H1 (cell line): ENCODE measurements at regions of chr1 and their contacts with region 1.

Region 1: DNA sequence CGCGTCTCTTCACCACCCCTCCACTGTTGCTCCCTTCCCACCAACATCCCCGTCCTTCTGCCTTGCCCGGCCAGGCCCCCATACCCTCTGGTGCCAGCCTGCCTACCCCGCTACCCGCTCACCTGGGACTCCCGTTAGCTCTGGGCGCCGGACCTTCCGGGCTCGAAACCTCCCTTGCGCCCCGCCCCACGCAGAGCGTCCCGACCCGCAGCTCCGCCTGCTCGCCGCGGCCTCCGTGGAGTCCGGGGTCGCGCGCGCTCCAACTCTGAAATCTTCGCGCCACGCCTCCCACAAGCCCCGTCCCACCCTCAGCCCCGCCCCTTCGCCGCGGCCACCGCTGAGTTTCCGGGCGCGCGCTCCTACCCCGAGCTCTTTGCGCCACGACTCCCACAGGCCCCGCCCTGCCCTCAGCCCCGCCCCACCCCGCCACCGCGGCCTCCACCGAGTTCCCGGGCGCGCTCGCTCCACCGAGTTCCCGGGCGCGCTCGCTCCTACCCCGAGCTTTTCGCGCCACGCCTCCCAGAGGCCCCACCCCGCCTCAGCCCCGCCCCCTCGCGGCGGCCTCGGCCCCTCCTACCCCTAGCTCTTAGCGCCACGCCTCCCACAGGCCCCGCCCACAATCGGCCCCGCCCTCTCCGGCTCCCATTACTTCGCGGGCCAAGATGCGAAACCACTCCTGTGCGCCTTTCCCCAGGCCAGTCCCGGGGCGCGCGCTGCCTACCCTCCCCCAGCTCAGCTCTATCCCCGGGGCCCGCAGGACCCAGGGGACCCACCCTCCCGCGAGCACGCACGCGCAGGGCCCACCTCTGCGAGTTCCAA is at the start of gene IFT25:
- DNase-seq: peak; percentile 73 to 100
- H3K4me3 ChIP-seq: peak within 1 kb of the TSS; percentile 77 to 98 (median 79)
- H3K27ac ChIP-seq: peak within 1 kb of the TSS; percentile 49; the same call in 1 of the 2 replicates
- H3K4me1 ChIP-seq: peaks cover 4 to 18% (median 10%) of the 10 kb centered on the region in 4 experiments
- H3K27me3 ChIP-seq: no peaks in the 10 kb centered on the region
- CTCF ChIP-seq: no peak
- EP300 ChIP-seq: no peak
- POLR2A ChIP-seq: no peak; a peak in 1 of 3 replicates
- RAD21 ChIP-seq: no peak
- total RNA-seq, gene IFT25: 29.7 and 36.3 TPM in 2 replicates

Region 2: DNA sequence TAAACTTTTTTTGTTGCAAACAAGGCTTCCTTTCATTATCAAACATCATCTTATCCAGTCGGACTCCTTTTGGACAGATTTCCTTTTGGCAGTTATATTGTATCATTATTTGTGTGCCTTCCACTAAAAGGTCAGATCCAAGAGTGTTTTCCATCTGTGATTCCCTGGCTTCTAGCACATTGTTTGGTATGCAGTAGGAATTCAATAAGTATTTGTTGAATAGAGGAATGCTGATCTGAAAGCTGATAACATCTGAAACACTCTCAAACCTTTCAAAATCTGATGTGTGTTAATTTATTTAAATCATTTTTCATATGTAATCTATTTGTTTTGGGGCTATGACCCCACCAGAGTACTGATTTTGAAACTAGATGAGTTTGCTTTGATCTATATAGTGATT is 146.5 kb before region 1 on chr1:
- CTCF ChIA-PET with region 1: no interaction called
- POLR2A ChIA-PET with region 1: no interaction called
- DNase-seq: no peak
- H3K4me3 ChIP-seq: no peak overlapping the region
- H3K27ac ChIP-seq: no peak overlapping the region
- H3K4me1 ChIP-seq: no peaks in the 10 kb centered on the region
- H3K27me3 ChIP-seq: no peaks in the 10 kb centered on the region
- CTCF ChIP-seq: no peak
- EP300 ChIP-seq: no peak
- POLR2A ChIP-seq: no peak
- RAD21 ChIP-seq: no peak

Region 3: GRCh38 chr1:53869454-53870117 is 76.1 kb before region 1 on chr1:
- CTCF ChIA-PET with region 1: interaction called, 123 read pairs
- POLR2A ChIA-PET with region 1: interaction called, 4 read pairs
- DNase-seq: no peak
- H3K4me3 ChIP-seq: no peak overlapping the region
- H3K27ac ChIP-seq: no peak overlapping the region
- H3K4me1 ChIP-seq: no peaks in the 10 kb centered on the region
- H3K27me3 ChIP-seq: no peaks in the 10 kb centered on the region
- CTCF ChIP-seq: no peak
- EP300 ChIP-seq: no peak
- POLR2A ChIP-seq: no peak
- RAD21 ChIP-seq: no peak

Region 4: DNA sequence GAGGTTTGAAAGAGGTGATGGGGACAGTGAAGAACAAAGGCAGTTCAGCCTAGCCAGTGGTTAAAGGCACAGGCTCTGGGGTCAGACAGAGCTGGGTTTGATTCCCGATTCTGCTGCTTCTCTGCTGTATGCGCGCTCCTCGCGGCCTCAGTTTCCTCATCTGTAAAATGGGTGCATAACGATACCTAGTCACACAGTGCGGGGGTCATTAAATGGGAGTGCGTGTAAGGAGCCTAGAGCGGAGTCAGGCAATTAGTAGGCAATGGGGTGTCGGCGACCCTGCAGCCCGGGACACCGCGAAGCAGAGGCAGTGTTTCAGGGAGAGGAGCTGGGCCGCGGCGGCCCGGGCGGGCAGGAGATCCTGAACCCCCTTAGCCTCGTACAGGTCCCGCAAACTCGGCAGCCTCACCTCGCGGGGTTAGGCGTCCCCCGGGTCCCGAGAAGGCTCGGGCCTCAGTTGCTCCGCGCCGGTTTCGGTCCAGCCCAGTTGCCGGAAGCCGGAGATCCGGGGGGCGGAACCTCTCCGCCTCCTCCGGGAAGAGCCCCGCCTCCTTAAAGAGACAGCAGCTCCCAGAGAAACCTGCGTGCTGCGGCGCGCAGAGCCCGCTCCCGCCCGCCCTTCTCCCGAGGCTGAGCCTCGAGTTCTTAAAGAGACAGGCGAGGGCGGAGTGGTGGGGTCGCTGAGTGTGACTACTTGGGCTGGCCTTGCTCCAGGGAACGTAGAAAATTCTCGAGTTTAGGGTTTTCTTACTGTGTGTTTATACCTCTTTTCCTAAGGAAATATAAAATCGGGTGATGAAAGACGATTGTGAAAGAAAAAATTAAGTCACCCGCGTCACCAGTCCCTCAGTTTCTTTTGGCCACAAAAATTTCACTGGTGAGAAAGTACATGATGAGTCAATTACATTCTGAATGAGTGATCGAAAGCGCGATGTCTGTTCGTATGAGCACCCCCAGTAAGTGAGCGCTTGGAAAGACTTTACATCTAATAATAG is 56.0 kb before region 1 on chr1 and contains the start of gene YIPF1:
- CTCF ChIA-PET with region 1: interaction called, 14 read pairs
- POLR2A ChIA-PET with region 1: interaction called, 4 read pairs
- DNase-seq: peak; percentile 82 to 85
- H3K4me3 ChIP-seq: peak within 1 kb of the TSS; percentile 87 to 96 (median 92)
- H3K27ac ChIP-seq: peak within 1 kb of the TSS; percentile 62; the same call in 1 of the 2 replicates
- H3K4me1 ChIP-seq: peaks cover 0 to 7% (median 2%) of the 10 kb centered on the region in 4 experiments; a peak in 3 of 7 replicates
- H3K27me3 ChIP-seq: no peaks in the 10 kb centered on the region; a peak in 1 of 7 replicates
- CTCF ChIP-seq: no peak
- EP300 ChIP-seq: no peak
- POLR2A ChIP-seq: peak in 1 of 2 experiments; percentile 62; a peak in 2 of 3 replicates
- RAD21 ChIP-seq: no peak
- total RNA-seq, gene YIPF1: 31.8 and 32.6 TPM in 2 replicates

Region 5: DNA sequence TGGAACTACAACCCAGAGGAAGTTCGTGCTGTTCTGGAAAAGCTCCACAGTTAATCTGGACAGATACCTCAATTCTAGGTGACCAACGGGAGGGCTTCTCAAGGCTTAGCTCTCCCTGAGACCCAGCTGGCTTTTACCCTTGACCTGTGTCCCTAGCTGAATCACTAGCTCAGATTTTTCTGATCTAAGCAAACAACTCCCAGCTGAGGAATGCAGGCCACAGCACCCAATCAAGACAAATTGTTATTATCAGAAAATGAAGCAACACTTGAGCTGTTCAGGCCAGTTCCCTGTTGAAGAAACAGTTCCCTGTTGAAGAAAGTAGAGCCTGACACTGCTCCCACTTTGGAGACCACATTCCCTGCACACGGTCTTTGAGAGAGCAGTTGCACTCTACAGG is 35.7 kb before region 1 on chr1:
- CTCF ChIA-PET with region 1: interaction called, 32 read pairs
- POLR2A ChIA-PET with region 1: interaction called, 4 read pairs
- DNase-seq: no peak
- H3K4me3 ChIP-seq: no peak overlapping the region
- H3K27ac ChIP-seq: no peak overlapping the region
- H3K4me1 ChIP-seq: peaks cover 7 to 13% (median 11%) of the 10 kb centered on the region in 4 experiments
- H3K27me3 ChIP-seq: no peaks in the 10 kb centered on the region
- CTCF ChIP-seq: no peak
- EP300 ChIP-seq: no peak
- POLR2A ChIP-seq: no peak
- RAD21 ChIP-seq: no peak

Region 6: DNA sequence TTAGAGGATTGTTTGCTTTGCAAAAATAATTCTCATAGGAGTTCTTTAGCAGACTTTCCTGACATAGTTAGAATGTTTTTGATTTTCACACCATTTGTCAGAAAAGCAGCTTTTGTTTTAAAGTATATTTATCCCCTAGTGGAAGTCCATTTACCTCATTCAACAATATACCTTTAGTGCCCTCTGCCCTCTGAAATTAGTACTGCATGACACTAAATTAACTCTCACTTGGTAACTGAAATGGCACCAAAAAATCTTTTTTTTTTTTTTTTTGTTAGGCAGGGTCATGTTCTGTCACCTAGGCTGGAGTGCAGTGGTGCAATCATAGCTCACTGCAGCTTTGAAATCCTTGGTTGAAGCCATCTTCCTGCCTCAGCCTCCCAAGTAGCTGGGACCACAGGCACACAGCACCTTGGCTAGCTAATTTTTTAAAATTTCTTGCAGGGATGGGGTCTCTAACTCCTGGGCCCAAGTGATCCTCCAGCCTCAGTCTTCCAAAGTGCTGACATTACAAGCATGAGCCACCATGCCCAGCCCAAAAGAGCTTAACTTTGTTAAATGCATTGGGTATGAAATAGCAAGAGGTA is 14.1 kb after region 1 on chr1:
- CTCF ChIA-PET with region 1: interaction called, 83 read pairs
- POLR2A ChIA-PET with region 1: interaction called, 5 read pairs
- DNase-seq: no peak
- H3K4me3 ChIP-seq: no peak overlapping the region
- H3K27ac ChIP-seq: no peak overlapping the region
- H3K4me1 ChIP-seq: peaks cover 0 to 10% (median 0%) of the 10 kb centered on the region in 4 experiments; a peak in 4 of 7 replicates
- H3K27me3 ChIP-seq: no peaks in the 10 kb centered on the region
- CTCF ChIP-seq: peak in 2 of 3 experiments; percentile 52 to 58; a peak in 2 of 4 replicates
- EP300 ChIP-seq: no peak
- POLR2A ChIP-seq: no peak
- RAD21 ChIP-seq: peak; percentile 61 to 63

Region 7: GRCh38 chr1:54024358-54024757 is 78.7 kb after region 1 on chr1:
- CTCF ChIA-PET with region 1: no interaction called
- POLR2A ChIA-PET with region 1: no interaction called
- DNase-seq: no peak
- H3K4me3 ChIP-seq: no peak overlapping the region
- H3K27ac ChIP-seq: no peak overlapping the region
- H3K4me1 ChIP-seq: no peaks in the 10 kb centered on the region
- H3K27me3 ChIP-seq: no peaks in the 10 kb centered on the region
- CTCF ChIP-seq: no peak
- EP300 ChIP-seq: no peak
- POLR2A ChIP-seq: no peak
- RAD21 ChIP-seq: no peak